HEK293T (cell line): ENCODE measurements at regions of chr20 and their contacts with region 1.

Region 1: DNA sequence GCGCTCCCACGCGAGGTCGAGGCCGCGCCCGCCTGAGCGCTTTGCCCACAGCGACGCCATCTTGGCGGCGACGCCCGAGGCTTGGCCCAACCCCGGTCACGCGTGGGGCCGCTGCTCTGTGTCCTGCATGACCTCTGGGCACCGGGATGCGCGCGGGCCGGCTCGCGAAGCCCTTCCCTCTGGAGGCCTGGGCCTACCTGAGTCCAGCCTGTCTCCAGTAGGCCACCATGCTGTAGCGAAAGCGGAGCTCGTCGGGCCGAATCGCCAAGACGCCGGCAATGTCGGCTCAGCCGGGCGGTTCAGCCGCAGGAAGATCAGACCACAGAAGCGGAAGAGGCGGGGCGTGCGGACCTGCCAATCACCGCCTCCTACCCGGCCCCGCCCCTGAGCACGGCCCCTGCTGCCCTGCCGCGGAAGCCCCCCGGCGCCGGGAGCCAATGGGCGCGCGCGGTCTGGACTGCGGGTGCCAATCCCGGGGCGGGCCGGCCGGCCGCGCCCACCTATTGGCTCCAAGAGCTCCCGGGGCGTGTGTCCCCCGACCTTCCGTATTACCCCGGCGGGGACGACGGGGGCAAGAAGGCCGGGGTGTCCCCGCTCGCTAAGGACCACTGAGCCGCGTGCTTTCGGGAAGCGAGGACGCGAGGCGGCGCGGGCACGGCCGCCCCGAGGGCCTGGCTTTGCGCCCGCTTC is at the start of gene ATP5F1E:
- DNase-seq: peak; percentile 96

Region 2: GRCh38 chr20:58980700-58981627 is 51.2 kb before region 1 on chr20 and contains the start of gene NELFCD:
- CTCF ChIA-PET with region 1: no interaction called
- POLR2A ChIA-PET with region 1: interaction called, 10 read pairs
- DNase-seq: peak; percentile 99

Region 3: GRCh38 chr20:59007665-59008511 is 24.3 kb before region 1 on chr20:
- CTCF ChIA-PET with region 1: no interaction called
- POLR2A ChIA-PET with region 1: interaction called, 10 read pairs
- DNase-seq: no peak

Region 4: DNA sequence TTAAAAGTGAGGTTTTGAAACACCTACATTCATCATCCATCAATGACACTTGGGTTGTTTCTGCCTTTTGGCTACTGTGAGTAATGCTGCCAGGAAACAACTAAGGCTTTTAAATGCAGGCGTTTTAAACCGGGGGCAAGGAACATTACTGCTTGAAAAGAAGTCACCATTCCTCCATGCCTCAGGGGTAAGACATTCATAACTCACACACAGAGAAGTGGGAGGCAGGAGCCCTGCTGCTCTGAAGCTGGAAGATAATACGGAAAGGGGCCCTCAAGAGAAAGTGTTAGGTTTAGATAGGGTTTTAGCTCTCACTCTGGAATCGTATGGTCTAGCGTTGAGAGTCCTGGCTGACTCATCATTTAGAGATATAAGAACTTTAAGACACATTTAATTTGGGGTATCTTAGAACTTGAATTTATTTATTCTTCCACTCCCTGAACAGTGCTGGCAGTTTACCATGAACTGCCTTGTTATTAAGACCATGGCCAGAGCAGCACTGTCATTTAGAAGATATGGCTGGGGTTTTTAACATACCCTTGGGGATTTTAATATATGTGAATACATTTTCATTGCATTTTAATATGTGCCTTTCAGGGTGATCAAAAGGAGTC is 11.1 kb before region 1 on chr20:
- CTCF ChIA-PET with region 1: no interaction called
- POLR2A ChIA-PET with region 1: interaction called, 11 read pairs
- DNase-seq: no peak

Region 5: DNA sequence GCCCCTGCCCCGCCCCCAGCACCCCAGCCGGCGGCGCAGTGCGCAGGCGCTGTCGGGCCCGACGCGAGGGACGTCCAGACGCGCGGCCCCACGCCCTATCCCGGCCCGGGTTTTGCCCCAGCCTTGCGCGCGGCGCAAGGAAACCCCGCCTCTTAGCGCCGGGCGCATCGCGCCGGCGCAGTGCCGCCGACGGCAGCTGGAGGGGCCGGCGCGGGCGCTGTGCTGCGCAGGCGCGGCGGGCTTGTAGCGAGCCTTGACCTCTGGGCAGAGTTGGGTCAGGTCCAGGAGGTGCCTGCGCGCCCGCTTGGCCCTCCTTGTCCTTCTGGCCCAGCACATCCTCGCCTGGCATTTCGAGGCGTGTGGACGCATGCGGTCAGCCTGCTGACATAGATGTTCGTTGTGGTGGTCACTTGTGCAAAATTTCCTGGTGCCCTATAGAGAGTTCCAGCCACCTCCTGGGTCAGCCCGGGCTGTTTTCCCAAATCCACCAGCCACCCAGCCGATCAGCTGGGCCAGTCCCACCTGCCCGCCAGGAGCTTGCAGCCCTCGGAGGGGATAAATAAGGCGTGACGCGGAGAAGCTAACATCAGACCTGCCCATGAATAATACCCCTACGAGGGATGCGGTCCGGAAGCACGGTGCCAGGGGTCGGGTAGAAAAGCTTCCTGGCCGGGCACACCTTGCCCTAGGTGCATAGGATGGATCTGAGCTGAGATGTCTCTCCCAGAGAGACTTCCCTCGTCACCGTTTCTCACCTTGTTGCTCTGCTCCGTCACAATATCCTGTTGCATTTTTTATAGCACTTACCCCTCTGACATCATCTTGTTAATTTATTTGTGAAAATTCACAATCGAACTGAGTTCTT is 10.9 kb after region 1 on chr20:
- CTCF ChIA-PET with region 1: no interaction called
- POLR2A ChIA-PET with region 1: interaction called, 29 read pairs
- DNase-seq: peak; percentile 98

Region 6: DNA sequence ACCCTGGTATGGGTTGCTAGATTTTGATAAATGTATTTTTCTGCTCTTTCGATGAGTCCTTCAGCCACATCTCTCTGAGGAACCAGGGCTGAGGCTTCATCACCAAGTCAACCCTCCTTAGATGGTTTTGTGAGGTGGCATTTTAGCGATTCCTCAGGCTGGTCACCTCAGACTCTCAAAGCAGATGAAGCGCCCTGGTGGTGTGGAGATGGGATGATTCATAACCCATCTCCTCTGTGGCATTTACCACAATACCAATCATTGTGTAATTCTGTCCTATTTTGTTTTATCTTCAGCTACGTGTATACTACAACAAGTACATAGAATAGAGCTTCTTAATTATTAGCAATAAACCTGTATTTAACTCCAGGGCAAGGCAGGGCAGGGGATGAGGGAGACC is 210.5 kb after region 1 on chr20:
- CTCF ChIA-PET with region 1: no interaction called
- POLR2A ChIA-PET with region 1: no interaction called
- DNase-seq: no peak